ENCODE measurements at regions of chr3 and their contacts with region 1.

Region 1: GRCh38 chr3:65019443-65020055 is 331.7 kb upstream of the ADAMTS9 start:
- DNase-seq: peak; percentile 24 to 42
- H3K4me3 ChIP-seq: no peak overlapping the region
- H3K4me3 Mint-ChIP-seq: peak overlapping the region; percentile 58
- H3K27ac Mint-ChIP-seq: peak overlapping the region; percentile 77
- H3K4me1 ChIP-seq: peaks cover 41% of the 10 kb centered on the region
- H3K4me1 Mint-ChIP-seq: peaks cover 33% of the 10 kb centered on the region
- H3K27me3 ChIP-seq: no peaks in the 10 kb centered on the region
- H3K27me3 Mint-ChIP-seq: no peaks in the 10 kb centered on the region
- CTCF ChIP-seq: no peak

Region 2: DNA sequence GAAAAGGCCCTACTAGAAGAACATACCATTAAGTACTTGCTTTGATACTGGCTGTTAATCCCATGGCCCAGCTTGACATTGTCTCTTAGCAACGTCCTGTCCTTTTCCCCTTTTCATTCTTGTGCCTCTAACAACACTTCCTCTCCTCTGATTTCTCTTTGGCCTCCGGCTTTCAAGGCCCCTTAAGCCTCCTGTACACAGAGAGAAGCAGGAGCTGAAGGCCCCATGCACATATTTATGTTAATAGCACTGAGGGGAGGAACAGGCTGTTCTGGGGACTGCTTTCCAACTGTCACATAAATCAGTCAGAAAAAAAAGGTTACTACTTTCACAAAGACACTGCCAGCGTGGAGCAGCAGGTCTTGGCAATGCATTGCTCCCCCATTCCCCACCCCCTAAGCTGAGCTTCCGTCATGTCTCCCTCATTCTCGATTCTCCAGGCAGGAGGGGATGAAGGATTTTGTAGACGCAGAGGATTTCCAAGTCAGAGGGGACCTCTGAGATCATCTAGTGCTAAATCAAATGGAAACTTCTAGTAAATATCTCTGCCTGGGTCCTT is 74.3 kb before region 1 on chr3:
- CTCF ChIA-PET with region 1: no interaction called
- POLR2A ChIA-PET with region 1: no interaction called
- intact Hi-C with region 1: loop called (anchors 1 kb)
- DNase-seq: peak; percentile 84 to 87
- H3K4me3 ChIP-seq: no peak overlapping the region
- H3K4me3 Mint-ChIP-seq: peak overlapping the region; percentile 25
- H3K27ac Mint-ChIP-seq: peak overlapping the region; percentile 10
- H3K4me1 ChIP-seq: peaks cover 25% of the 10 kb centered on the region
- H3K4me1 Mint-ChIP-seq: peaks cover 13% of the 10 kb centered on the region
- H3K27me3 ChIP-seq: no peaks in the 10 kb centered on the region
- H3K27me3 Mint-ChIP-seq: no peaks in the 10 kb centered on the region
- CTCF ChIP-seq: no peak

Region 3: DNA sequence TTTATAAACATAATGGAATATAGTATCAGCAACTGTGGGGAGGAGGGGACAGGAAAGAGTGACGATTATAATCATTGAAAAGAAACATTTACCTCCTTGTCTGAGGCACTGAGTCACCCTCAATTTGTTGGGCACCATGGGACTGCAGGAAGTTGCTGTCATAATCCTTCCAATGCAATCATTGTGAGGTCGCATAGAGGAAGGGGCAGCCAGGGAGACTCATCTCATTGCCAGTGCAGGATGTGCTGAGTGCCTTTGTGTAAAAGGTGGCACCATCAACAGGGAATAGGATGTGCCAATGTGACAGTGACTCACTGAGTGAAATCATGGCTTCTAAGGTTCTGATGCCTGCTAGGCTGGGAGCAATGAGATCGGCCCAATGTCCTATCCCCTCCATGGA is 31.4 kb before region 1 on chr3:
- CTCF ChIA-PET with region 1: no interaction called
- POLR2A ChIA-PET with region 1: no interaction called
- intact Hi-C with region 1: no loop called
- DNase-seq: no peak
- H3K4me3 ChIP-seq: no peak overlapping the region
- H3K4me3 Mint-ChIP-seq: no peak overlapping the region
- H3K27ac Mint-ChIP-seq: no peak overlapping the region
- H3K4me1 ChIP-seq: no peaks in the 10 kb centered on the region
- H3K4me1 Mint-ChIP-seq: no peaks in the 10 kb centered on the region
- H3K27me3 ChIP-seq: no peaks in the 10 kb centered on the region
- H3K27me3 Mint-ChIP-seq: no peaks in the 10 kb centered on the region
- CTCF ChIP-seq: no peak

Region 4: DNA sequence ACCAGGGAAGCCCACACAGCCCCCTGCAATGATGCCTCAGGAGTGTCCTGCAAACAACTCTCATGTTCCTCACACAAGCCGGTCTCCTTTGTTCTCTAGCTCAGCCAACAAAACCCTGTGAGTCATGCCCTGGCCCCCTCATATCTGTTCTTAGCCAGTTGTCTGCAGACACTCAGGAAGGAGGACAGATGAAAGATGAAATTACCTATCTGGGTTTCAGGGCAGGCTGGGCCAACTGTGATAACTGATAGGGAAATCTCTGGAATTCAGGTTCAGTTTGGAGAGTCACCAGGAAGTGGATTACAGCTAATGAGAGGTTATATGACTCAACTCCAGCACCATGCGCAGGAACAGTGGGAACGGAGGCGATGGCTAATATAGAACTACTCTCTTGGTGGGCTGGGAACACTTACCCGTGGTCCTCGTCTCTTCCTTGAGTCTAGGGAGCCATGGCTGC is 20.2 kb after region 1 on chr3:
- CTCF ChIA-PET with region 1: interaction called, 3 read pairs
- POLR2A ChIA-PET with region 1: interaction called, 3 read pairs
- intact Hi-C with region 1: loop called (anchors 1 kb)
- DNase-seq: peak; percentile 86 to 95
- H3K4me3 ChIP-seq: no peak overlapping the region
- H3K4me3 Mint-ChIP-seq: peak overlapping the region; percentile 30
- H3K27ac Mint-ChIP-seq: peak overlapping the region; percentile 92
- H3K4me1 ChIP-seq: peaks cover 20% of the 10 kb centered on the region
- H3K4me1 Mint-ChIP-seq: peaks cover 18% of the 10 kb centered on the region
- H3K27me3 ChIP-seq: no peaks in the 10 kb centered on the region
- H3K27me3 Mint-ChIP-seq: no peaks in the 10 kb centered on the region
- CTCF ChIP-seq: no peak

Region 5: DNA sequence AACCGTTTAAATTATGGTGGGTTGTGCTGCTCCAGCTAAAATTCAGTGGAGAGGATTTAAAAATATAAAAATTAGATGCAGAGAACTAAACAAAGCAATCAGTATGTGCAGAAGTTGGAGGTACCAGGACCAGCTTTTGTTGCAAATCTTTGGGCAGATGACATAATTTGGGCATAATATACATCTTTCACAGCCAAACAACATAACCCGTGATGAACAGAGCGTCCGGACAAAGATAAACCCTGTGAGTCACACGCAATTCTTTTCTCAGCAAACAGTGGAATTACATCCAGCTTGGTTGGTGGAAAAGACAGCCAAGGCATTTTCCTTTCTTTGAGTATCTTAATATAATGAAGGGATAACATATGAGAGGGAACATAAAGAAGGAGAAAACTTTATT is 87.6 kb after region 1 on chr3:
- CTCF ChIA-PET with region 1: no interaction called
- POLR2A ChIA-PET with region 1: no interaction called
- intact Hi-C with region 1: no loop called
- DNase-seq: no peak
- H3K4me3 ChIP-seq: no peak overlapping the region
- H3K4me3 Mint-ChIP-seq: no peak overlapping the region
- H3K27ac Mint-ChIP-seq: no peak overlapping the region
- H3K4me1 ChIP-seq: peaks cover 9% of the 10 kb centered on the region
- H3K4me1 Mint-ChIP-seq: peaks cover 15% of the 10 kb centered on the region
- H3K27me3 ChIP-seq: no peaks in the 10 kb centered on the region
- H3K27me3 Mint-ChIP-seq: no peaks in the 10 kb centered on the region
- CTCF ChIP-seq: no peak

Region 6: GRCh38 chr3:65497846-65498245 is 478.3 kb after region 1 on chr3:
- CTCF ChIA-PET with region 1: no interaction called
- POLR2A ChIA-PET with region 1: no interaction called
- intact Hi-C with region 1: no loop called
- DNase-seq: no peak
- H3K4me3 ChIP-seq: no peak overlapping the region
- H3K4me3 Mint-ChIP-seq: no peak overlapping the region
- H3K27ac Mint-ChIP-seq: no peak overlapping the region
- H3K4me1 ChIP-seq: no peaks in the 10 kb centered on the region
- H3K4me1 Mint-ChIP-seq: no peaks in the 10 kb centered on the region
- H3K27me3 ChIP-seq: no peaks in the 10 kb centered on the region
- H3K27me3 Mint-ChIP-seq: no peaks in the 10 kb centered on the region
- CTCF ChIP-seq: no peak

Measured in Caco-2 (cell line).